Activated CD4-positive, alpha-beta T cell treated with anti-CD3 and anti-CD28 coated beads for 36 hours (primary cell): ENCODE measurements at regions of chr9 and their contacts with region 1.

Region 1: GRCh38 chr9:89984214-89984613 is 379.4 kb downstream of the GADD45G start:
- DNase-seq: no peak
- ATAC-seq: peak; percentile 56
- H3K4me3 Mint-ChIP-seq: peak overlapping the region; percentile 27
- H3K27ac Mint-ChIP-seq: peak overlapping the region; percentile 89
- H3K4me1 Mint-ChIP-seq: peaks cover 47% of the 10 kb centered on the region
- H3K27me3 Mint-ChIP-seq: peaks cover 33% of the 10 kb centered on the region

Region 2: GRCh38 chr9:89318123-89319014 is 665.8 kb before region 1 on chr9 and contains the start of gene SECISBP2:
- CTCF ChIA-PET with region 1: no interaction called
- POLR2A ChIA-PET with region 1: no interaction called
- intact Hi-C with region 1: loop called in 1 of 2 experiments (anchors 10 kb)
- DNase-seq: peak; percentile 97
- ATAC-seq: peak; percentile 90
- H3K4me3 Mint-ChIP-seq: peak within 1 kb of the TSS; percentile 82
- H3K27ac Mint-ChIP-seq: peak within 1 kb of the TSS; percentile 98
- H3K4me1 Mint-ChIP-seq: peaks cover 79% of the 10 kb centered on the region
- H3K27me3 Mint-ChIP-seq: no peaks in the 10 kb centered on the region
- total RNA-seq, gene SECISBP2: 38.6 to 49.9 TPM

Region 3: DNA sequence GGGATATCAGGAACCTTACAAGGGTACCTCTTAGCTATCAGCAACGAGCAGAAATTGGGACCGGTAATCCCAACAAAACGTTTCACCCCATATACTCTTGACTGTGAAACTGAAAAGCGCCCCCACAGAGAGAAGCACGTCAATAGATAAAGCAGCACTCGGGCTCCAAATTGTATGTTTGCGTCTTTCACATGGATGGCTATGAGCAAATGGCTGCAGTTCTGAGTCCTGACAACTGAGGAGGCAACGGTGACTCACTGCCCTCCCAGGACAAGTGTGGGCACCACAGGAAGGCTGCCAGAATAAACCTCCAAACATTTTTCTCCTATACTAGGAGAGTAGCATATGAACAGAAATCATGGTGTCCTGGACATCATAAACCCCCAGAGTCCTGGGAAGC is 522.9 kb before region 1 on chr9:
- CTCF ChIA-PET with region 1: no interaction called
- POLR2A ChIA-PET with region 1: no interaction called
- intact Hi-C with region 1: loop called in 1 of 2 experiments (anchors 5 kb)
- DNase-seq: peak; percentile 78
- ATAC-seq: peak; percentile 48
- H3K4me3 Mint-ChIP-seq: no peak overlapping the region
- H3K27ac Mint-ChIP-seq: peak overlapping the region; percentile 70
- H3K4me1 Mint-ChIP-seq: peaks cover 98% of the 10 kb centered on the region
- H3K27me3 Mint-ChIP-seq: no peaks in the 10 kb centered on the region

Region 4: GRCh38 chr9:89919169-89919681 is 65.0 kb before region 1 on chr9:
- CTCF ChIA-PET with region 1: interaction called, 8 read pairs
- POLR2A ChIA-PET with region 1: no interaction called
- intact Hi-C with region 1: loop called (anchors 1 kb)
- DNase-seq: peak; percentile 62
- ATAC-seq: peak; percentile 81
- H3K4me3 Mint-ChIP-seq: no peak overlapping the region
- H3K27ac Mint-ChIP-seq: peak overlapping the region; percentile 59
- H3K4me1 Mint-ChIP-seq: peaks cover 14% of the 10 kb centered on the region
- H3K27me3 Mint-ChIP-seq: peaks cover 10% of the 10 kb centered on the region

Region 5: DNA sequence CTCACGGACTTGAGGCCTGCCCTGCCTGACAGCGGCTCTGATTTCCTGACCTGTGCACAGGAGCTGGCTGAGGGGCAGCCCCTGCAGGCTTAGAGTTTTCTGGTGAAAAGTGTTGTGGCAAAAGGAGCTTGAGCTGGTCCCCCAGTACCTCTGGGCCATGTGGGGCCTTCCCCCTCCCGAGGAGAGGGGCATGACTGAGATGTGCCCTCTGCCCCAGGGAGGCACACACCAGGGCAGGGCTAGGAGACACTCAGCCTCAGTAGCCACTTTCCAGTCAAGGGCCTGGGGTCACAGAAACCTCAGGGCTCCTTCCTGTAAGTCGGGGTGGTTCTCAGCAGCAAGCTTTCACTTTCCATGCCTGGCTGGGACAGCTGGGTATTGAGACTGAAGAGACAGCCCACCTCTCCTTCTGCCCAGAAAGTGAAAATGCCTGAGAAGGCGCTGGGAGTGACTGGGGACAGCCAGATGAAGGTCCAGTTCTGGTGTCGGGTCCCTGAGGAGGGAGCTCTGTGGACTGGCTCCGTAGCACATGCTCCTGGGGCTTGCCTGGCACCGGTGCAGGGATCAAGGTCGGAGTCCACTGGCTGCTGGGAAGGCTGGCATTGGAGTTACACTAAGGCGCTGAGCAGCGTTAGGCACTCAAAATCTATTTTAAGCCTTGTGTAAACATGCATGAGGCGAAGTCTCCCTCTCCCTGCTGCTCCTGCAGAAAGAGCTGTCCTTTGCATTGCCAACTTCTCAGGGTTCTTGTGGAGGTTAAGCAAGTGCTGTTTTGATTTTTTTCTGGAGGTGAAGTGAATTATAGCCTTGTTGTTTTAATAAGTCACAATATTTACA is 15.5 kb after region 1 on chr9:
- CTCF ChIA-PET with region 1: interaction called, 8 read pairs
- POLR2A ChIA-PET with region 1: interaction called, 9 read pairs
- intact Hi-C with region 1: loop called in 1 of 2 experiments (anchors 1 kb)
- DNase-seq: peak; percentile 84
- ATAC-seq: peak; percentile 91
- H3K4me3 Mint-ChIP-seq: peak overlapping the region; percentile 42
- H3K27ac Mint-ChIP-seq: peak overlapping the region; percentile 86
- H3K4me1 Mint-ChIP-seq: peaks cover 25% of the 10 kb centered on the region
- H3K27me3 Mint-ChIP-seq: no peaks in the 10 kb centered on the region

Region 6: GRCh38 chr9:91060503-91061343 is 1076.5 kb after region 1 on chr9:
- CTCF ChIA-PET with region 1: no interaction called
- POLR2A ChIA-PET with region 1: no interaction called
- intact Hi-C with region 1: loop called in 1 of 2 experiments (anchors 10 kb)
- DNase-seq: no peak
- ATAC-seq: peak; percentile 55
- H3K4me3 Mint-ChIP-seq: no peak overlapping the region
- H3K27ac Mint-ChIP-seq: peak overlapping the region; percentile 83
- H3K4me1 Mint-ChIP-seq: peaks cover 48% of the 10 kb centered on the region
- H3K27me3 Mint-ChIP-seq: no peaks in the 10 kb centered on the region